Breast epithelium (tissue), 4 donors: ENCODE measurements at regions of chr5 and their contacts with region 1.

Region 1: GRCh38 chr5:130135506-130135905 is 231.2 kb downstream of the CHSY3 start:
- DNase-seq: no peak
- H3K4me3 ChIP-seq: no peak overlapping the region
- H3K27ac ChIP-seq: no peak overlapping the region
- H3K4me1 ChIP-seq: no peaks in the 10 kb centered on the region
- H3K27me3 ChIP-seq: no peaks in the 10 kb centered on the region
- CTCF ChIP-seq: no peak
- POLR2A ChIP-seq: no peak

Region 2: GRCh38 chr5:130092991-130093390 is 42.5 kb before region 1 on chr5:
- intact Hi-C with region 1: loop called (anchors 2 kb)
- DNase-seq: no peak
- H3K4me3 ChIP-seq: no peak overlapping the region
- H3K27ac ChIP-seq: no peak overlapping the region
- H3K4me1 ChIP-seq: no peaks in the 10 kb centered on the region
- H3K27me3 ChIP-seq: no peaks in the 10 kb centered on the region
- CTCF ChIP-seq: no peak
- POLR2A ChIP-seq: no peak